Right cardiac atrium (tissue), 5 donors: ENCODE measurements at regions of chr17 and their contacts with region 1.

Region 1: GRCh38 chr17:56819431-56820145 is 14.1 kb downstream of the C17orf67 start:
- DNase-seq: peak in 1 of 3 donors; percentile 64
- ATAC-seq: peak; percentile 69 to 77
- H3K4me3 ChIP-seq: no peak overlapping the region
- H3K27ac ChIP-seq: no peak overlapping the region
- H3K4me1 ChIP-seq: no peaks in the 10 kb centered on the region
- H3K27me3 ChIP-seq: no peaks in the 10 kb centered on the region

Region 2: DNA sequence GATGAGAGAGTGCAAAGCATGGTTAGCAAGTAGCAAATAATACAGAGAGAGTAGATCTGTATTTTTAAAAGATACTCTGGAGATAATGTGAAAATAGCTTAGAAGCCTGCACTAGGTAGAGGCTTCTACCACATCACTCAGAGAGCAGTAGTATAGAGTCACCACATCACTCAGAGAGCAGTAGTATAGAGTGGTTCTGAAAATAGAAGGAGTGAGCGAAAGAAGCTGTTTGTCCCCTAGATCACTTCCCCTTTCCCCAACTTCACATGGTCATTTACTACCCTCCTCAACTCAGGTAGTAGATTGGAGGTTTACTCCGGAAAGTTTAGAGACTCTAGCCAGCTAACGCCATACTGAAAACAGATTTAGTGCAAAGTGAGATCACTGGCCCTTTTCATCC is 31.4 kb after region 1 on chr17:
- intact Hi-C with region 1: no loop called
- DNase-seq: no peak
- ATAC-seq: no peak
- H3K4me3 ChIP-seq: no peak overlapping the region
- H3K27ac ChIP-seq: no peak overlapping the region
- H3K4me1 ChIP-seq: no peaks in the 10 kb centered on the region
- H3K27me3 ChIP-seq: no peaks in the 10 kb centered on the region

Region 3: DNA sequence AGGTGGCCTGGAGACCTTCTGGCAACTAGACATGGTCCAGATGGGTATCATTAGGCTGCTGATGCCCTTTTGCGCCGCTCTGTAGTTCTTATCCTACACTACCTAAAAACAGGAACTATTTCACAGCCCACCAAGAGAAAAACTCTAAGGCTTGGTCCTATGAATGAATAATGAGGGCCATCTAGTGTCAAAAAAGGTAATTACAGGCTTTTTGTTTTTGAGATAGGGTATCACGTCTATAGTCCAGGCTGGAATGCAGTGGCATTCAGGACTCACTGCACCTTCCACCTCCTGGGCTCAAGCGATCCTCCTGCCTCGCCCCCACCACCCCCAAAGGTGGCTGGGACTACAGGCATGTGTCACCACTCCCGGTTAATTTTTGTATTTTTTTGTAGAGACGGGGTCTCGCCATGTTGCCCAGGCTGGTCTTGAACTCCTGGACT is 120.3 kb after region 1 on chr17:
- intact Hi-C with region 1: loop called (anchors 2 to 10 kb)
- DNase-seq: no peak
- ATAC-seq: peak; percentile 63 to 72
- H3K4me3 ChIP-seq: no peak overlapping the region
- H3K27ac ChIP-seq: no peak overlapping the region
- H3K4me1 ChIP-seq: no peaks in the 10 kb centered on the region
- H3K27me3 ChIP-seq: no peaks in the 10 kb centered on the region